ENCODE measurements at regions of chr17 and their contacts with region 1.

Region 1: DNA sequence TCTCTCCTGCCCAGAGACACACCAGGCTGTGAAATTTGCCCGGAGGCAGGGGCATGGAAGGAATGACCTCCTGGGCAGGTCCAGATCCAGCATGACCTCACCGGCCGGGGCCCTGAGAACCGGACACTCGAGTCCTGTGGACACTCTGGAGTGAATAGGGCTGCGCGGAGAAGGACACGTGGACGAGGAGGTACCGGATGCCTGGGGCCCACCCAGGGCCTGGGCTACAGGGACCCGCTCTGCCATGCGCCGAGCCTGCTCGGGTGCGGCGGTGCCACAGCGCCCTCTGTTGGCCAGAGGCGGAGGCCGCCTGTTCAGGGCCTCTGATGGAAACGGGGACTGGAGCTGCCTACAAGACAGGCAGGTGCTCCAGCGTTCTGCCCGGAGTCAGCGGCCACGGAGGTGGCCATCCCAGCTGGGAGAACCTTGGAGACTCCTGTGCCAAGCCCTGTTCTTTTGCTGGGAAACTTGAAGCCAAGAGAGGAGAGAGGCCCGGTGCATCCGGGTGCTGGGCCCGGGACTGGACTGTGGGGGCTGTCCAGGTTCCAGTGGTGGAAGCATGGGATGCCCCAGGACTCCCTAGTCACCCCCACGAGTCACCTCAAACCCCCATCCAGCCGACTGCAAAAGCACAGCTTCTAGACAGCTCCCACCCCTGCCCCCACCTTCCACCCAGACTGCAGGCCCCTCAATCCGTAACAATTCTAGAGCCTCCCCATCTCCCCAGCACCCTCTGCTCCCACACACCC is 19.3 kb upstream of the NXPH3 start:
- DNase-seq: no peak
- H3K4me3 ChIP-seq: no peak overlapping the region
- H3K27me3 ChIP-seq: 0 out of 2 replicates have a peak, but pooled peaks cover 1% of the 10 kb centered on the region
- CTCF ChIP-seq: peak; percentile 99

Region 2: DNA sequence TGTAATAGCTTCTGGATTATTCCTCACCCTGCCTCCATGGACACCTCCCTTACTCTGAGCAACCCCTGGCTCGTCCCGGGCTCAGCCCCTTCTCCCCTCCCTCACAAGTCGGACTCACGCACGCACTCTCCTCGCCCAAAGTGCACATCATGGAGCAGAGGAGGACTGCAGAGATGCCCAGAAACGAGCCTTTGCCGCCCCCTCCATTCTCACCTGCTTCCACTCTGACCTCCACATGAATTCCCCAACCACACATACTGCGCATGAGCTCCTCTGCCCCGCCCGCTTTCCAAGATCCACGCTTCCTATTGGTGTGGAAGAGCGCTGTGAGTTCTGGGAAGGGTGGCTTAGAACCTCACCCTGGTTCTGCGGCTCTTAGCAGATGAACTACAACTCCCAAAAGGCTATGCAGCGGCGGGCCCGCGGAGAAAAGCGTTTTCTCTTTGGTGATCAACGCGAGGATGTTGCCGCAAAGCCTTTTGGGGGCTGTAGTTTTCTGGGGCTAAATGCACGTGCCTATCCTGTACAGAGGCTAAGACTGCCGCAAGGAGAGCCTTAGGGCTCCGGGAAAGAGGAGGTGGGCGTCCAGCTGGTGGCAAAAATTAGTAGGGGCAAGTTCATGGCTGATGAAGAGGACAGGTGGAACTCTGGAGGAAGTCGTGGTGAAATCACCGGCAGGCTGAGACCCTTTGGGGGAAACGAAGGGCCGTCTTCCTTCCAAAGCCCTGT is 141.6 kb before region 1 on chr17 and contains the start of gene PHB1:
- CTCF ChIA-PET with region 1: interaction called, 83 read pairs
- POLR2A ChIA-PET with region 1: no interaction called
- DNase-seq: peak; percentile 95
- H3K4me3 ChIP-seq: peak within 1 kb of the TSS; percentile 87
- H3K27me3 ChIP-seq: no peaks in the 10 kb centered on the region
- CTCF ChIP-seq: no peak
- polyA plus RNA-seq, gene PHB1: 261 and 369 TPM in 2 replicates

Region 3: GRCh38 chr17:49456183-49456965 is 100.0 kb before region 1 on chr17:
- CTCF ChIA-PET with region 1: interaction called, 24 read pairs
- POLR2A ChIA-PET with region 1: no interaction called
- DNase-seq: peak; percentile 68
- H3K4me3 ChIP-seq: no peak overlapping the region
- H3K27me3 ChIP-seq: peaks cover 11% of the 10 kb centered on the region
- CTCF ChIP-seq: no peak

Region 4: GRCh38 chr17:49508061-49508865 is 48.1 kb before region 1 on chr17:
- CTCF ChIA-PET with region 1: interaction called, 21 read pairs
- POLR2A ChIA-PET with region 1: no interaction called
- DNase-seq: no peak
- H3K4me3 ChIP-seq: no peak overlapping the region
- H3K27me3 ChIP-seq: peaks cover 22% of the 10 kb centered on the region
- CTCF ChIP-seq: no peak

Region 5: DNA sequence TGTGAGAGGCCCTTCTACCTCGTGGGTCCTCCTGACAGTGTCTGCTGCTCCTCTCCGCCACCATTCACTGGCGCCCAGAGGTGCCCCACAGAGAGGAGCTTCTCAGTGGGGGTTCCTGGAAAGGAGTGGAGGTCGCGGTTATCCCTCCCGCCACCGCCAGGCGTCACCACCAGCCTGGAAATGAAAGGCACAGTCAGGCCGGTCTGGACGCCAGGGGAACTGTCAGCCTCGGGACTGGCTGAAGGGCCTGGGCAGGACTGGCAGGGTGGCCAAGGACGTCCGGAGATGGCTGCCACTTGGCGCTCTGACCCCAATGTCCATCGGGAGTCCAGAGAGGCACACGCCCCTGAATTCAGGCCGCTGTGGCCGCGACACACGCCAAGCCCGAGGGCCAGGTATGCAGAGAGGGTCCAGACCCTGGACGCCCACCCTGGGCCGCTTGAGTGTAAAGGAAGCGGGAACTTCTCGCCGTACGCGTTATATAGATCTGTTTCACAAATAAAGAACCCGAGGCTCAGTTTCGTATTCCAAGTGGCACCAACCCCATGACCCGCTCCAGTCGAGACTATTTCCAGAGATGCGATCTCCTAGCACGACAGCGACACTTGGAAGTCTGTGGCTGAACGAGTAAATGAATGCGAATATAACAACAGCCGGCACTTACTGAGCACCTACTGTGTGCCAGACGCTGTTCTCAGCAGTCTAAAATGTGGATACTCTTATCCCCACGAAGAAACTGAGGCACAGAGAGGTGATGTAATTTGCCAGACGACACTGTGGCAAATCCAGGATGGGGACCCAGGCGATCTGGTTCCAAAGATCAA is 11.7 kb after region 1 on chr17:
- CTCF ChIA-PET with region 1: interaction called, 77 read pairs
- POLR2A ChIA-PET with region 1: no interaction called
- DNase-seq: no peak
- H3K4me3 ChIP-seq: peak overlapping the region; percentile 23
- H3K27me3 ChIP-seq: peaks cover 7% of the 10 kb centered on the region
- CTCF ChIP-seq: peak; percentile 88

Region 6: GRCh38 chr17:49699966-49700575 is 143.7 kb after region 1 on chr17:
- CTCF ChIA-PET with region 1: interaction called, 44 read pairs
- POLR2A ChIA-PET with region 1: no interaction called
- DNase-seq: no peak
- H3K4me3 ChIP-seq: no peak overlapping the region
- H3K27me3 ChIP-seq: no peaks in the 10 kb centered on the region
- CTCF ChIP-seq: no peak